Ovary (tissue), 10 donors: ENCODE measurements at regions of chr1 and their contacts with region 1.

Region 1: GRCh38 chr1:43509723-43510375 is 20.8 kb upstream of the PTPRF start:
- DNase-seq: no peak
- H3K4me3 ChIP-seq: no peak overlapping the region
- H3K27ac ChIP-seq: no peak overlapping the region
- H3K4me1 ChIP-seq: no peaks in the 10 kb centered on the region
- H3K27me3 ChIP-seq: no peaks in the 10 kb centered on the region
- CTCF ChIP-seq: no peak
- EP300 ChIP-seq: no peak
- POLR2A ChIP-seq: no peak

Region 2: DNA sequence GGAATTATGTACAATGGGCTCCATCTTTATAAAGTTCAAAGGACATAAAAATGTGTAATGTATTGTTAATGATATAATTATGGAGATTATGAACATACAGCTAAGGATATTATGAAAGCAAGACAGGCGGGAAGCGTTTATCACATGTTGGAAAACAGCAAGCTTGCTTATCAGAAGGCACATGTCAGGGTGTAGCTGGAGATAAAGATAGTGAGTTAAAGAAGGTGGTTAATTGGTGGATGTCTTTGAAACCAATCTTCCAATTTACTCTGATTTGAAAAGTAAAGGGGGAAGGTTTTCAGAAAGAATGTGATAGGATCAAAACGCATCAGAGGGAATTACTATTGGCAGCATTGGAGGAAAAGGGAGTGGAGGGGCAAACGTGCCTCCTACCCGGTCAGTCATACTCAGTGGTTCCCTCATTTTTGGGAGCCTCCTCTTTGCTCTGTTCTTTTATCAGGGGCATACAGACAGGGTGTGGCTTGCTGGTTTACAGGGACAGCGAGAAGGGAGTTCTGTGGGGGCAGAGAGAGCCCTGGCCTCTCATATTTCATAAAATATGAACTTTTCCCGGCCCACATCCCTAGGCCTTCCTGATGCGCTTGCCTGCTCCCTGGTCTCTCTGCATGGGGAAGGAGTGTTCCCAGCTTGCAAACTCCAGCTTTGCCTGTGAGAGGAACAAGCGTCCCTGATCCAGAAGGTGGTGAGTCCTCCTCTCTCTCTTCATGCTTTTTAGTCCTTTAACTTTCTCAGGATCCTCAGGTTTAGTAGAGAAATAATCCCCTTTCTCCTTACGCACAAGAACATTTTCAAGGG is 684.6 kb before region 1 on chr1:
- intact Hi-C with region 1: loop called in 1 of 4 experiments (anchors 5 kb)
- DNase-seq: no peak
- H3K4me3 ChIP-seq: no peak overlapping the region
- H3K27ac ChIP-seq: no peak overlapping the region
- H3K4me1 ChIP-seq: no peaks in the 10 kb centered on the region
- H3K27me3 ChIP-seq: no peaks in the 10 kb centered on the region
- CTCF ChIP-seq: no peak
- EP300 ChIP-seq: no peak
- POLR2A ChIP-seq: no peak

Region 3: DNA sequence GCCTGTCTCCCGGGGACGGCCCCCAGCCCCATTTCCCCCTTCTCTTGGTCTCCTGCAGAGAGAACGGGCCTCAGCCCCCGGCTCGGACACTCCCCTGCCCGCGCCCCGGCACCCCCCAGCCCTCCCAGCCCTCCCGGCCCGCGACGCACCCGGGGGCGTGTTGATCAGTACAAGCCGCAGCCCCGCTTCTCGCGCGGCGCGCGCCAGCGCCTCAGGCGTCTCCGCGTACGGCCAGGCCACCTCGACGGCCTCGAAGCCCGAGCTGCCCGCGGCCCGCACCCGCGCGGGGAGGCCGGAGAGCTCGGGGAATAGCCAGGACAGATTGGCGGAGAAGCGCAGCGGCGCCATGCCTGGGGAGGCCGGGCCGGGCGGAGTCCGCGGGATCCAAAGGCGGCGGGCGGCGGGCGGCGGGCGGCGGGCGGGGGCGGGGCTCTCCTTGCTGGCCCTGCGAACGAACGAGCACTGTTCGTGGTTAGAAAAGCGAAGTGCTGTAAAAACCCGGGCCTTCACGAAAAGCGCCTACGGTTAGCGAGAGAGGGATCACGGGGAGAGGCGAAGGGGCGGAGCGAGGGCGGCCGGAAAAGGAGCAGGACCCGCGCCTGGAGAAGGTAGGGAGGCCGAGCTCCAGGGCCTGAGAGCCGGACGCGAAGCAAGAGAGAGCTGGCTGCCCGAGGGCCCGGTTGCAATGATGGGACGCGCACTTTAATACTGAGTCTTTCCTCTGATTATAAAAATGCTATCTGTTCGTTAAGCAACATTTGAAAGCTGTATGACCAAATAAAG is 56.2 kb before region 1 on chr1 and contains the start of gene HYI:
- intact Hi-C with region 1: no loop called
- DNase-seq: peak; percentile 82 to 90 (median 83)
- H3K4me3 ChIP-seq: peak within 1 kb of the TSS; percentile 60
- H3K27ac ChIP-seq: peak within 1 kb of the TSS; percentile 92 to 95
- H3K4me1 ChIP-seq: peaks cover 2% of the 10 kb centered on the region
- H3K27me3 ChIP-seq: no peaks in the 10 kb centered on the region
- CTCF ChIP-seq: no peak
- EP300 ChIP-seq: no peak
- POLR2A ChIP-seq: no peak
- total RNA-seq, gene HYI: 57.3 to 94.4 (median 78.9) TPM